ENCODE measurements at regions of chr9 and their contacts with region 1.

Region 1: GRCh38 chr9:19174127-19174912 is 47.0 kb upstream of the PLIN2 start:
- DNase-seq: peak; percentile 89
- H3K4me3 ChIP-seq: no peak overlapping the region
- H3K27ac ChIP-seq: no peak overlapping the region
- H3K4me1 ChIP-seq: peaks cover 0 to 3% (median 0%) of the 10 kb centered on the region in 4 donors
- H3K27me3 ChIP-seq: no peaks in the 10 kb centered on the region
- CTCF ChIP-seq: peak; percentile 21 to 71 (median 40)
- EP300 ChIP-seq: no peak
- POLR2A ChIP-seq: no peak

Region 2: DNA sequence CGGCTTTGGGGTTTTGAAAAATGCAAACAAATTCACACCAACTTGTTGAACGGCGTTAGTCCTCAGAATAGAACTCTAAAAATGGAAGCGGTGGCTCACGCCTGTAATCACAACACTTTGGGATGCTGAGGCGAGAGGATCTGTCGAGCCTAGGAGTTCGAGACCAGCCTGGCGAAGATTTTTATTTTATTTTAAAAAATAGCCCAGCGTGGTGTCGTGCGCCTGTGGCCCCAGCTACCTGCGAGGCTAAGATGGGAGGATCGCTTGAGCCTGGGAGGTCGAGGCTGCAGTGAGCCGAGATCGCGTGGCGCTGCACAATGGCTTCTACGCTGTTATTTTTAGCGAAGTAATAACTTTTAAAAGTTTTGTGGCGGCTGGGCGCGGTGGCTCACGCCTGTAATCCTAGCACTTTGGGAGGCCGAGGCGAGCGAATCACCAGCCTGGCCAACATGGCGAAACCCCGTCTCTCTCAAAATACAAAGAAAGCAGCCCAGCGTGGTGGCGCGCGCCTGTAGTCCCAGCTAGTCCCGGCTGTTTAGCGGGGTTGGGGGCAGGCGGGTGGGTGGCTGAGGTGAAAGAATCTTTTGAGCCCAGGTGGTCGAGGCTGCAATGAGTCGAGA is 46.3 kb before region 1 on chr9:
- intact Hi-C with region 1: loop called (anchors 5 kb)
- DNase-seq: peak; percentile 72
- H3K4me3 ChIP-seq: peak overlapping the region; percentile 67 to 90 (median 80)
- H3K27ac ChIP-seq: peak overlapping the region; percentile 94 to 99 (median 96)
- H3K4me1 ChIP-seq: peaks cover 0 to 26% (median 15%) of the 10 kb centered on the region in 4 donors
- H3K27me3 ChIP-seq: no peaks in the 10 kb centered on the region
- CTCF ChIP-seq: no peak
- EP300 ChIP-seq: no peak
- POLR2A ChIP-seq: no peak

Region 3: GRCh38 chr9:19208695-19209137 is 34.4 kb after region 1 on chr9:
- intact Hi-C with region 1: no loop called
- DNase-seq: no peak
- H3K4me3 ChIP-seq: no peak overlapping the region
- H3K27ac ChIP-seq: no peak overlapping the region
- H3K4me1 ChIP-seq: no peaks in the 10 kb centered on the region
- H3K27me3 ChIP-seq: no peaks in the 10 kb centered on the region
- CTCF ChIP-seq: no peak
- EP300 ChIP-seq: no peak
- POLR2A ChIP-seq: no peak

Region 4: GRCh38 chr9:19230356-19231125 is 56.2 kb after region 1 on chr9 and contains the start of gene DENND4C:
- intact Hi-C with region 1: no loop called
- DNase-seq: peak; percentile 90
- H3K4me3 ChIP-seq: peak within 1 kb of the TSS; percentile 67 to 99 (median 98)
- H3K27ac ChIP-seq: peak within 1 kb of the TSS; percentile 93 to 100 (median 98)
- H3K4me1 ChIP-seq: peaks cover 0 to 46% (median 23%) of the 10 kb centered on the region in 4 donors
- H3K27me3 ChIP-seq: no peaks in the 10 kb centered on the region
- CTCF ChIP-seq: no peak
- EP300 ChIP-seq: no peak
- POLR2A ChIP-seq: peak; percentile 60 to 63
- total RNA-seq, gene DENND4C: 75.6 to 109 (median 101) TPM

Measured in sigmoid colon (tissue), 7 donors.